ENCODE measurements at regions of chr21 and their contacts with region 1.

Region 1: GRCh38 chr21:38733973-38734546 is 71.7 kb upstream of the ETS2 start:
- DNase-seq: peak; percentile 71
- ATAC-seq: peak; percentile 47
- H3K4me3 Mint-ChIP-seq: peak overlapping the region; percentile 62
- H3K27ac Mint-ChIP-seq: no peak overlapping the region
- H3K4me1 Mint-ChIP-seq: peaks cover 12% of the 10 kb centered on the region
- H3K27me3 Mint-ChIP-seq: peaks cover 23% of the 10 kb centered on the region
- CTCF ChIP-seq: peak; percentile 74

Region 2: GRCh38 chr21:38219049-38219628 is 514.9 kb before region 1 on chr21:
- CTCF ChIA-PET with region 1: no interaction called
- POLR2A ChIA-PET with region 1: no interaction called
- intact Hi-C with region 1: loop called (anchors 10 kb)
- DNase-seq: no peak
- ATAC-seq: no peak
- H3K4me3 Mint-ChIP-seq: no peak overlapping the region
- H3K27ac Mint-ChIP-seq: no peak overlapping the region
- H3K4me1 Mint-ChIP-seq: no peaks in the 10 kb centered on the region
- H3K27me3 Mint-ChIP-seq: peaks cover 4% of the 10 kb centered on the region
- CTCF ChIP-seq: peak; percentile 59

Region 3: DNA sequence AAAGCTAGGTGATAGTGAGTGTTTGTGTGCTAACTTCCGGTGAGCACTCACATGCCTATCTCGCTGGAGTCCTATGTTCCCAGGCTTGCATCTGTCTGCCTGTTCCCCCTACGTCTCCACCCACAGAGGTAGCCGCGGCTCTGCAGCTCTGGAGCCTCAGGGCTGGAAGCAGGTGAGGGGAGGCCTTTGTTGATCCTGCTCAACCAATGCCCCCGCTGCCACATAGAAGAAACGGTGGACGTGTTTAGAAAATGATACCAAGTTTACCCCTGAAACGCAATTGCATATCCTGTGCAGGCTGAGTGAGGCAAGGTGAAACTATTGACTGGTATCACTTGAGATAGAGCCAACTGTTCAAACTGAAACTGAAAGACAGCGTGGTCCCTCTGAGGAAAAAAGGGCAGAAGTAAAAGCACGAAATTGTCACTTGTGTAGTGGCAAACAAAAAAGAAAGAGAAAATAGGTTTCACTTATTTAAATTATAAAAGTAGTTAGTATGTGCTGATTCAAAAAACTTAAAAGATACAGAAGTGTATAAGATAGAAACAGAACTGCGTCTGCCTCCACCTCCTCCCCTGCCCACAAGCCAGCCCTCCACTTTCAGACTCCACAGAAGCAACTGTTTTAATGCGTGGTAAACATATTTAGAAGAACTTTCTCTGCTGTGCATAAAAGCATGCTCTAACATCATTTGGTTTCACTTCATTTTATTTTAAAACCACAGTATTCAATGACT is 33.1 kb after region 1 on chr21:
- CTCF ChIA-PET with region 1: no interaction called
- POLR2A ChIA-PET with region 1: no interaction called
- intact Hi-C with region 1: loop called (anchors 2 kb)
- DNase-seq: peak; percentile 23
- ATAC-seq: peak; percentile 96
- H3K4me3 Mint-ChIP-seq: peak overlapping the region; percentile 83
- H3K27ac Mint-ChIP-seq: peak overlapping the region; percentile 83
- H3K4me1 Mint-ChIP-seq: peaks cover 29% of the 10 kb centered on the region
- H3K27me3 Mint-ChIP-seq: peaks cover 29% of the 10 kb centered on the region
- CTCF ChIP-seq: no peak

Region 4: DNA sequence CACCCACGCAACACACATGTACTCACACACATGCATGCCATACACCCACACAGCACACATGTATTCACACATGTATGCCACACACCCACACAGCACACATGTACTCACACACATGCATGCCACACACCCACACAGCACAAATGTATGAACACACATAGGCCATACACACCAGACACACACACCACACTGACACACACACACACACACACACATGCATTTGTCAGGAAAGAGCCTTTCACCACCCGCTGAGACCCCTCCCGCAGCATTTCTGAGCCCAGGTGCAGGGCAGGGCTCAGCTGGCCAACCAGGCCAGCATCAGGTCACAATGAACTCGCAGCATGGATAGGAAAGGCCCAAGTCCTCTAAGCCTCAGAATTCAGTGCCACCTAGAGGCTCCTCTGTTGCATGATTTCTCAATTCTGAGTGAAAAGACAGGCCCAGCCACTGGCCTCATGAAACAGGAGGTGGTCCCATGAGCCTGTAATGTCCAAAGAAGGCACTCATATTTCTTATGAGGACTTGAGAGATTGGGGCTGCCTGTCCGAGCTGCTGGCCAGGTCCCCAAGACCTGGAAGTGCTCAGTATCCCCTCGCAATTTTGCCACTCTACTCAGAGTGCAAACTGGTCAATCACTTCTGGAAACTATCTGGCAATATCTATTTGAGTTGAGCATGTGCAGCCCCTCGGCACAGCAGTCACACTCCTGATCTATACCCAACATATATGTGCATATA is 391.9 kb after region 1 on chr21:
- CTCF ChIA-PET with region 1: interaction called, 5 read pairs
- POLR2A ChIA-PET with region 1: no interaction called
- intact Hi-C with region 1: loop called (anchors 1 kb)
- DNase-seq: no peak
- ATAC-seq: no peak
- H3K4me3 Mint-ChIP-seq: no peak overlapping the region
- H3K27ac Mint-ChIP-seq: no peak overlapping the region
- H3K4me1 Mint-ChIP-seq: no peaks in the 10 kb centered on the region
- H3K27me3 Mint-ChIP-seq: no peaks in the 10 kb centered on the region
- CTCF ChIP-seq: no peak

Region 5: GRCh38 chr21:39175154-39175553 is 441.1 kb after region 1 on chr21:
- CTCF ChIA-PET with region 1: interaction called, 3 read pairs
- POLR2A ChIA-PET with region 1: no interaction called
- intact Hi-C with region 1: loop called (anchors 1 kb)
- DNase-seq: no peak
- ATAC-seq: no peak
- H3K4me3 Mint-ChIP-seq: no peak overlapping the region
- H3K27ac Mint-ChIP-seq: no peak overlapping the region
- H3K4me1 Mint-ChIP-seq: no peaks in the 10 kb centered on the region
- H3K27me3 Mint-ChIP-seq: no peaks in the 10 kb centered on the region
- CTCF ChIP-seq: no peak